Naive thymus-derived CD4-positive, alpha-beta T cell (primary cell): ENCODE measurements at regions of chr1 and their contacts with region 1.

Region 1: DNA sequence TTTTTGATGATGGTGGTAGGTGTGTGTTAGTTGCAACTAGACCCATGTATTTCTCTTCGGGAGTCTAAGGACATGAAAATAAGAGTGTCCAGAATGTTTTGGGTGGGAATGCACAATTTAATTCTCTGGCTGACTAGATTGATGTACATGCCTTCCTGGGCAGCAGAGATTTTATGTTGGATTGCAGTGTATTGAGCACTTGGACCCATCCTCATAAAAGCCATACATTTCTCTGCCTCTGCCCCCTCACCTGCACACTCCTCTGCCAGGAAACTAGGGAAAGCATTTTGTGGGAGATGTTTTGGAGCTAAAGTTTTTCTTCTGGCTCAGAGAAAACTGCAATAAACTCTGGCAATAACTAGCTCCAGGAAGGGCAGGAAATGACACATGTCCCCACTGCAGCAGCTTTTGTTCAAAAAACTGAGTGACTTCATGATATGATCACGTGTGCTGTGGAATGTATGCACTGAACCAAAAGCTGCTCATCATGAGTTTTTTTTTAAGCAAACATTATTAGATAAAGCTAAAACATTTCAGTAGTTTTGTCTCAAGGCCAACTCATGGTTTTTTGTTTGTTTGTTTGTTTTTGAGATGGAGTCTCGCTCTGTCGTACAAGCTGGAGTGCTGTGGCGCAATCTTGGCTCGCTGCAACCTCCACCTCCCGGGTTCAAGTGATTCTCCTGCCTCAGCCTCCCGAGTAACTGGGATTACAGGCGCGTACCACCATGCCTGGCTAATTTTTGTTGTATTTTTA is 17.6 kb downstream of the RIT1 start:
- DNase-seq: peak in 7 of 9 donors; percentile 38 to 61 (median 46)
- ATAC-seq: peak; percentile 88
- H3K4me3 ChIP-seq: no peak overlapping the region
- H3K4me3 Mint-ChIP-seq: peak overlapping the region in 7 of 10 donors; percentile 11 to 59 (median 29)
- H3K27ac ChIP-seq: peak overlapping the region; percentile 56
- H3K27ac Mint-ChIP-seq: peak overlapping the region; percentile 72 to 91 (median 85)
- H3K4me1 ChIP-seq: peaks cover 4 to 13% of the 10 kb centered on the region in 2 donors
- H3K4me1 Mint-ChIP-seq: peaks cover 9 to 19% (median 16%) of the 10 kb centered on the region in 7 donors
- H3K27me3 ChIP-seq: no peaks in the 10 kb centered on the region
- H3K27me3 Mint-ChIP-seq: no peaks in the 10 kb centered on the region

Region 2: DNA sequence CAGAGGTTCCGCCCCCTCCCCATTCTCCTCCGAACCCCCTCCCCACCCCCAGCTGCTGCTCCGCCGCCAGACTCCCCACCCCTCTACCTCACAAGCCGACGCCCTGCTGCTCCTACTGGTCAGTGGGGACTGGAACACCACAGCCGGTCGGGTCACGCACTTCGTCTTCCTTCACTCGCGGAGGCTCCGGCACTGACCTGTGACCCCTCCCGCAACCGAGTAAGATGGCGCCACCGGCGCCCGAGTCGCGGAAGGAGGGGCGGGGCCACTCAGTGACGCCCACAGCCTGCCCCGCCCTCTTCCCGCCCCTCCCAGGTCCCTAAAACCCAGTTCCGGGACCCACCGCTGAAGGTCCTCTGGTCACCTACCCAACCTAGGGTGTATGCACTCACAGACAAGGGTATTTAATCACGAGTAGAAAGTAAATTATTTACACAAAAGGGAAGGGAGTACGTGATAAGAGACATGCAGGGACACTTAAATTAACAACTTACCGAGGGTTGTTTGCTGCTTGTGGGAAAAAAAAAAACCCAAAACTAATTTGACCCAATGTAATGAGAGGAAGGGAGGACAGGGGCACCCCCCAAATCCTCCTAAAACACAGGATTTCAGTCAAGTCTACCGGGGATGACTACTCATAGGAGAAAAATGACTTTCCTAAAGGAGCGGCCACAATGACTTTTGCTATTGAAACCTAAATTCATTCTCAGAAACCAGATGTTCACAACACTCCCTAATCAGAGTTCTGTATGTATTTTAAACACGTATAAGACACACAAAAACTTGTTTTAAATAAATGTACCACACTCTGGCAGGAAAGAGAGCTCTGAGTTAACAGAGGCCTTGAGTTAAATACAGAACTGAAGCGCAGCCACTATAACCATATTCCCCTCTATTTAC is 17.8 kb after region 1 on chr1 and contains the start of gene RIT1:
- CTCF ChIA-PET with region 1: no interaction called
- POLR2A ChIA-PET with region 1: interaction called, 3 read pairs
- intact Hi-C with region 1: loop called in 1 of 2 experiments (anchors 1 kb)
- DNase-seq: peak; percentile 68 to 85 (median 76)
- ATAC-seq: peak; percentile 99
- H3K4me3 ChIP-seq: peak within 1 kb of the TSS; percentile 73
- H3K4me3 Mint-ChIP-seq: peak within 1 kb of the TSS; percentile 85 to 99 (median 96)
- H3K27ac ChIP-seq: peak within 1 kb of the TSS; percentile 80
- H3K27ac Mint-ChIP-seq: peak within 1 kb of the TSS; percentile 90 to 99 (median 96)
- H3K4me1 ChIP-seq: peaks cover 5 to 17% of the 10 kb centered on the region in 2 donors
- H3K4me1 Mint-ChIP-seq: peaks cover 11 to 38% (median 21%) of the 10 kb centered on the region in 7 donors
- H3K27me3 ChIP-seq: no peaks in the 10 kb centered on the region
- H3K27me3 Mint-ChIP-seq: no peaks in the 10 kb centered on the region
- total RNA-seq, gene RIT1: 34.0 to 83.9 (median 41.4) TPM